ENCODE measurements at regions of chr3 and their contacts with region 1.

Region 1: DNA sequence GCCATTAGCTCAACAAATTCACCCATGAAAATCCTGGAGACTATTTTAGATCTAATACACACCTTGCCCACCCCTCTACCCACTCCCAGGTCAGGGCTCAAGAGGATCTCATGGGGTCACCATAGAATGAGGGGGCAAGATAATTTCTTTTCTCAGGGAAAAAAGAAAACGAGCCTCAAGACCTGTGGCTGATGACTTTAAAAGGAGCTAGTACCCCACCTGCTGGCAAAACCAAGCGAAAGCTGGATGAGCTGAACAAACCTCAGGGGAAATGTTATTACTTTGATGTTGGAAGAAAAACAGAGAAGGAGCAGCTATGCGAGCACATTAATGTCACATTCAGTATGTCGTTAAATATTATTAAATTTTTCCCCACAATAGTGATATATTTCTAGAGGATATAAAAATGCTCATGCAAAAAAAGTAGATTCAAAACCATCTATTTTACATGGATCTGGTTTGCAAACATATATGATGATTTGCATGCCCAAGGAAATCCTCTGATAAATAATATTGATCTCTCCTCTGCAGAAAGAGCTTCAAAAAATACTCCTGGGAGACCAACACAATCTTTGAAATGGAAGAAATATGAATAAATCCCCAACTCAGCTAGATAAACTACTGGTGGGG is 37.7 kb downstream of the PLD1 start:
- DNase-seq: peak; percentile 63
- ATAC-seq: peak; percentile 43
- H3K4me3 Mint-ChIP-seq: no peak overlapping the region
- H3K27ac Mint-ChIP-seq: no peak overlapping the region
- H3K4me1 Mint-ChIP-seq: peaks cover 21% of the 10 kb centered on the region
- H3K27me3 Mint-ChIP-seq: no peaks in the 10 kb centered on the region
- CTCF ChIP-seq: peak; percentile 53; the same call in 1 of the 2 replicates

Region 2: GRCh38 chr3:170961616-170962400 is 810.7 kb before region 1 on chr3:
- CTCF ChIA-PET with region 1: interaction called, 10 read pairs
- POLR2A ChIA-PET with region 1: no interaction called
- DNase-seq: no peak
- ATAC-seq: no peak; the same call in 1 of the 2 replicates
- H3K4me3 Mint-ChIP-seq: no peak overlapping the region
- H3K27ac Mint-ChIP-seq: no peak overlapping the region
- H3K4me1 Mint-ChIP-seq: no peaks in the 10 kb centered on the region
- H3K27me3 Mint-ChIP-seq: no peaks in the 10 kb centered on the region
- CTCF ChIP-seq: peak; percentile 28; the same call in 1 of the 2 replicates

Region 3: DNA sequence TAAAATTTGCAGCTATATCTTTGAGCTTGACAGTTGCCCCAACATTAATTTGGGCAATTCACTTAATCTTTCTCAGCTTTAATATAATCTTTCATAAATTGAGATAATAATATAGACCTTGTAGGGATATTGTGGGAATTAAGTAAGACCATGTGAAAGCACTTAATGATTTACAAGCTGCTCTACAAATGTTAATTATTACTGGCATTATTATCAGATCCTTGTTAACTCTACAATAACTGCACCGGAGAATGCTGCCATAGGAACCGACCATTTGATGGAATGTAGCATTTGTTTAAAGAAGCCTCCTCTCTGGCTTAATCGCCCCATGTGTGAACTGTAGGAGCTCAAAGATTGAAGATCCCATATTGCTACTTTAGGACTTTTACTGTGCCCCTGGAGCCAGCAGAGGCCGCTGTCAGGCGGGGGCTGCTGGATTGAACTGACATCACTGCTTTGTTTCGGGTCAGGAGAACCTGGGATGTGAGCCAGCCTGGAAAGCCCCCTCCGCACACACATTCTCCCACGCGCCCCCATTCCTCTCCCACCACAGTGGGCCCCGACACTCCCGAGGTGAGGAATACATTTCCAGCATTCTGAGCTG is 158.1 kb before region 1 on chr3:
- CTCF ChIA-PET with region 1: interaction called, 80 read pairs
- POLR2A ChIA-PET with region 1: no interaction called
- DNase-seq: peak; percentile 68
- ATAC-seq: peak; percentile 96
- H3K4me3 Mint-ChIP-seq: no peak overlapping the region
- H3K27ac Mint-ChIP-seq: no peak overlapping the region
- H3K4me1 Mint-ChIP-seq: no peaks in the 10 kb centered on the region
- H3K27me3 Mint-ChIP-seq: no peaks in the 10 kb centered on the region
- CTCF ChIP-seq: peak; percentile 45; the same call in 1 of the 2 replicates

Region 4: DNA sequence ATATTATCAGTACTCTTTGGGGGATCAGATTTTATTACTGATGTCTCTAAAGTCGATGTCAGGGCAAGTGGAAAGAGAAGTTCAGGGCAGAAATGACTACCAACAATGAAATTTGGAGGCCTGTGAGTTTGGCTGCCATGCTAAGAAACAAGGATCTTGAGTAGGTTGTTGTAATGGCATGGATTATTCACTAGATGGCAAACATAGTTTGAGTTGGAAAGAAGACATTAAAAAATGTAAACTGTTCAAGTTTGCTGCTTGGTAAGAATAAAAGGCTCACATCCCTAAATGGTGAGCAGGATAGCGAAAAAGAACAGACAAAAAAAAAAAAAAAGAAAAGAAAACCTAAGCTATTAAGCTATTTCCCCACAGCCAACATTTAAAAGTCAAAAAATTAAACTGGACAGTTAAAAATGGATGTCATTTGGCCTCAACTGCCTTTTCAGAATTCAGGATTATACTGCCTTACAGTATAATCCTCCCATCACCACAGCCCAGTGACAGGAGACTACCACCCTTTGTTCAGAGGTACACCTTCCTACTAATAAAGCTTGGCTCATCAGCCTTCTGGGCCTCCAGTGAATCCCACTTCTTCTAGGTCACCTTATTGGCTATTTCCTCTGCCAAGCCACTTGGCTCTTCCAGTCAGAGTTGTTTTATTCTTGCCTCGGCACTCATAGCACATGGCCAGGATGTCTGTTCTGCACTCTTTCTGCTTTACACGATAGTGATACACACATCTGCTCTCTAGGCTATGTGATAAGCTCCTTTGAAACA is 126.0 kb before region 1 on chr3:
- CTCF ChIA-PET with region 1: interaction called, 30 read pairs
- POLR2A ChIA-PET with region 1: interaction called, 9 read pairs
- DNase-seq: no peak
- ATAC-seq: peak; percentile 43
- H3K4me3 Mint-ChIP-seq: no peak overlapping the region
- H3K27ac Mint-ChIP-seq: no peak overlapping the region
- H3K4me1 Mint-ChIP-seq: no peaks in the 10 kb centered on the region
- H3K27me3 Mint-ChIP-seq: no peaks in the 10 kb centered on the region
- CTCF ChIP-seq: peak; percentile 25

Region 5: GRCh38 chr3:171757361-171758034 is 15.0 kb before region 1 on chr3:
- CTCF ChIA-PET with region 1: interaction called, 19 read pairs
- POLR2A ChIA-PET with region 1: no interaction called
- DNase-seq: no peak
- ATAC-seq: no peak
- H3K4me3 Mint-ChIP-seq: no peak overlapping the region
- H3K27ac Mint-ChIP-seq: no peak overlapping the region
- H3K4me1 Mint-ChIP-seq: peaks cover 7% of the 10 kb centered on the region
- H3K27me3 Mint-ChIP-seq: no peaks in the 10 kb centered on the region
- CTCF ChIP-seq: no peak

Region 6: GRCh38 chr3:171801738-171802600 is 29.4 kb after region 1 on chr3:
- CTCF ChIA-PET with region 1: no interaction called
- POLR2A ChIA-PET with region 1: no interaction called
- DNase-seq: no peak
- ATAC-seq: no peak
- H3K4me3 Mint-ChIP-seq: no peak overlapping the region
- H3K27ac Mint-ChIP-seq: no peak overlapping the region
- H3K4me1 Mint-ChIP-seq: peaks cover 10% of the 10 kb centered on the region
- H3K27me3 Mint-ChIP-seq: no peaks in the 10 kb centered on the region
- CTCF ChIP-seq: no peak

Region 7: GRCh38 chr3:171829841-171830517 is 57.4 kb after region 1 on chr3:
- CTCF ChIA-PET with region 1: interaction called, 21 read pairs
- POLR2A ChIA-PET with region 1: no interaction called
- DNase-seq: peak; percentile 78
- ATAC-seq: peak; percentile 98
- H3K4me3 Mint-ChIP-seq: no peak overlapping the region
- H3K27ac Mint-ChIP-seq: no peak overlapping the region
- H3K4me1 Mint-ChIP-seq: peaks cover 36% of the 10 kb centered on the region
- H3K27me3 Mint-ChIP-seq: peaks cover 3% of the 10 kb centered on the region; the same call in 1 of the 2 replicates
- CTCF ChIP-seq: peak; percentile 34; the same call in 1 of the 2 replicates